IMR-90 (cell line): ENCODE measurements at regions of chr10 and their contacts with region 1.

Region 1: DNA sequence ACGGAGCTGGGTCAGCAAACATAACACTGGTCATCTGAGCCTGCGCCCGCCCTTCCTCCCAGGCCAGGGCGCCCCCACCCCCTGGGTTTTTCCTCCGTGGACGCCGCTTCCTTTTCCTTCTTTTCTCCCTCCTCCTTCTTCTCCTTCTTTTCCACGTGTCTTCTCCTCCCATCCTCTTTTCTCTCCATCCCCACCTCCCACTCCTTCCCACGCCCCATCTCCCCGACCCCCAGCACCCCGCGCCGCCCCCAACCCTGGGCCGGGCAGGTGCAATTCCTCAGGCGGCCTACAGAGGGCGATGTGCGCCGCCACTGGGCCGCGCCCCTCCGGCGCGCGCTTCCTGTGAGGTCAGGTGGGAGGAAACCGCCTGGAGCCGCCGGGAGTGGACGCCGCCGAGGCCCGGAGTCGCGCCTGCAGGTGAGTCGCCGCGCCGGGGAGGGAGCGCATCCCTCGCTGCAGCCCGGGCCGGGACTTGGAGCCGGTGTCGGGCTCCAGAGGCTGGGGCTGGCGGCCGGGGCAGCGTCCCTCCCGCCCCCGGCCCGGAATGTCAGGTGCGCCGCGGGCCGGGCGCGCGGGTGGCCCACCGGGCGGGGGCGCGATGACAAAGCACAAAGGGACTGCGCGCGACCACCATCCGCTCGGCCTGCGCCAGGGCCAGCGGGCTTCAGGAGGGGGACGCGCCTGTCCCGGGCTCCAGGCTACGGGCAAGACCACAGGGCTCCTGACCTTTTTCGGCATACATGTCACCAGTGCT is at the start of gene FAM241B:
- DNase-seq: peak; percentile 5
- ATAC-seq: peak; percentile 98
- H3K4me3 ChIP-seq: peak within 1 kb of the TSS; percentile 42
- H3K27ac ChIP-seq: no peak within 1 kb of the TSS
- H3K4me1 ChIP-seq: no peaks in the 10 kb centered on the region
- H3K27me3 ChIP-seq: peaks cover 53% of the 10 kb centered on the region
- CTCF ChIP-seq: peak; percentile 59
- POLR2A ChIP-seq: no peak
- RAD21 ChIP-seq: 0 out of 2 replicates have a peak, but pooled peaks have one; percentile 33
- total RNA-seq, gene FAM241B: 0.18 and 0.28 TPM in 2 replicates

Region 2: GRCh38 chr10:69558559-69558958 is 71.5 kb before region 1 on chr10:
- CTCF ChIA-PET with region 1: no interaction called
- POLR2A ChIA-PET with region 1: no interaction called
- dilution Hi-C with region 1: no loop called
- in situ Hi-C with region 1: loop called (anchors 5 kb)
- intact Hi-C with region 1: no loop called
- DNase-seq: no peak
- ATAC-seq: no peak
- H3K4me3 ChIP-seq: no peak overlapping the region
- H3K27ac ChIP-seq: no peak overlapping the region
- H3K4me1 ChIP-seq: no peaks in the 10 kb centered on the region
- H3K27me3 ChIP-seq: peaks cover 38% of the 10 kb centered on the region
- CTCF ChIP-seq: no peak
- POLR2A ChIP-seq: no peak
- RAD21 ChIP-seq: no peak